ENCODE measurements at regions of chr16 and their contacts with region 1.

Region 1: DNA sequence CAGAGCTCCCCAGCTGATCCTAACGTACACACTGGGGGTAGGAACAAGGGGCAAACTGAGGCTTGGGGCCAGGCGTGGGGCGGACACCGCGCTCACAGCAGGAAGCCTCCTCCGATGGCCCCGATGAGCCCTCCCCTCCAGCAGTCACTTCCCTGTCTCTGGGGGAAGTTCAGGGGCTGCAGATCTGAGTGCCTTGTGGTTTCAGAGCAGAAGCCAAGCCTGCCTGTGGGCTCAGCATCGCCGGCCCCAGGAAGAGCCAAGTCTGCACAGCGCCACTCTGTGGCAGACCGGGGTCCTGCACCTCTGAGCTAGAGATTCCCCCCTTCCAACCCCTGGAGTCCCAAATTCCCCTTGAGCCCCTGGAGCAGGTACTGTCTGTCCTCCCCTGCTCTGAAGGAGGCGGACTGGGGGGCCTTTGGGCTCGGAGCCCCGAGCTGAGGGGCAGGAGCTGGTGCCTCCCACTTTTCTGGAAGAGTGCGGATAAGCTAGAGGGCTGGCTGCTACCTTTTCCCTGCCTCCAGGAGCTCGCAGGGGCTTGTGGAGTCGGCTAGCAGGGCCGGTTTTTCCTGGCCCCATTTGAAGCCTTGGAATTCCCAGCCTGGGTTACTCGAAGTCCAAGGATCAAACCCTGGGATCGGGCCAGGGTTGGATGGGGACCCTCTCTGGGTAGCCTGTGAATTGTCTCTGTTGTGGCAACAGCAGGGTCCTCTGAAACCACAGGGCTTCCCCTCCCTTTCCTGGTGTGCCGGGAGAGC is 2.9 kb downstream of the GSE1 start:
- DNase-seq: peak; percentile 79 to 84
- ATAC-seq: peak in 1 of 2 experiments; percentile 37; a peak in 3 of 6 replicates
- H3K4me3 ChIP-seq: peak overlapping the region; percentile 96
- H3K27ac ChIP-seq: peak overlapping the region; percentile 98 to 99; a peak in 5 of 6 replicates
- H3K4me1 ChIP-seq: peaks cover 22% of the 10 kb centered on the region
- CTCF ChIP-seq: peak; percentile 76
- EP300 ChIP-seq: no peak
- POLR2A ChIP-seq: no peak
- RAD21 ChIP-seq: peak; percentile 53 to 55

Region 2: GRCh38 chr16:85420501-85421337 is 195.3 kb before region 1 on chr16:
- CTCF ChIA-PET with region 1: interaction called, 85 read pairs
- POLR2A ChIA-PET with region 1: interaction called, 3 read pairs
- DNase-seq: peak; percentile 74 to 78
- ATAC-seq: peak; percentile 49 to 72; a peak in 5 of 6 replicates
- H3K4me3 ChIP-seq: no peak overlapping the region
- H3K27ac ChIP-seq: peak overlapping the region in 1 of 2 experiments; percentile 86; a peak in 3 of 6 replicates
- H3K4me1 ChIP-seq: peaks cover 27% of the 10 kb centered on the region
- CTCF ChIP-seq: peak; percentile 100
- EP300 ChIP-seq: no peak
- POLR2A ChIP-seq: no peak
- RAD21 ChIP-seq: peak; percentile 64 to 86

Region 3: DNA sequence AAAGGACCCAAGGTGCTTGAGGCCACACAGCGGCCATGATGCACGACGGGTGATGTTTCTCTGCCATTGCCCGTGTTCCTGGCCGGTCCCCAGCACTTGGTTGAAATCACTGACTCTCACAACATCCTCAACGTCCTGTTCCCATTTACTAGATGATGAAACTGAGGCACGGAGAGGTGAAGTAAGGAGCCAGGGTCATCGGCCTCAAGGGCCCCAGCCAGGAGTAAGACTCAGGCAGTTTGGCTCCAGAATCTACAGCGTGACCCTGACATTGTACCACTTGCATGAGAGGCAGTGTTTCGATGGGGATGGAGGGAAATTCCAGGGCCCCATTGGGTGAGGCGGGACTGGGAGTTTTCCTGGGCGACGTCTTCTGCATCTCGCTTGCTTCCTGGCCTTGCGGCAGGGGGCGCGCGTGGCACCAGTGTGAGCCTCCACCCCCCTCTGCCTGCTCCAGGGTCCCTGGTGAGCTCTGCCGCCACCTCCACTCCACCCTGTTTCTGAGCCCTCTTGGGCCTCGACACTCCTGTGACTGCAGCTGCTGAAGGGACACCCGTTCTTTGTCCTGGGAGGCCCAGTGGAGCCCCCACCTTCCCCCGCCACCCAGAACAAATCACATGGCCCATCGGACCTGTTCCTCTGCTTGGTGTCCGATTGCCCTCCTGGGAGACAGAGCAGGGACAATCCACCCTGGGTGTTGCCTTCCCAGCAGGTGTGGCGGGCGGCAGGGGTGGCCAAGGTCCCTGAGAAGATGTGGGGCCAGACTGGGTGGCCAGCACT is 135.9 kb before region 1 on chr16:
- CTCF ChIA-PET with region 1: interaction called, 55 read pairs
- POLR2A ChIA-PET with region 1: no interaction called
- DNase-seq: peak; percentile 67 to 94
- ATAC-seq: peak; percentile 89 to 95
- H3K4me3 ChIP-seq: no peak overlapping the region
- H3K27ac ChIP-seq: peak overlapping the region; percentile 18 to 70; a peak in 2 of 6 replicates
- H3K4me1 ChIP-seq: 0 out of 3 replicates have a peak, but pooled peaks cover 3% of the 10 kb centered on the region
- CTCF ChIP-seq: peak; percentile 73
- EP300 ChIP-seq: no peak
- POLR2A ChIP-seq: no peak
- RAD21 ChIP-seq: peak; percentile 65 to 76

Region 4: GRCh38 chr16:85564277-85565051 is 51.6 kb before region 1 on chr16:
- CTCF ChIA-PET with region 1: interaction called, 39 read pairs
- POLR2A ChIA-PET with region 1: interaction called, 3 read pairs
- DNase-seq: peak in 1 of 2 experiments; percentile 38
- ATAC-seq: peak; percentile 41 to 55; a peak in 5 of 6 replicates
- H3K4me3 ChIP-seq: no peak overlapping the region
- H3K27ac ChIP-seq: peak overlapping the region in 1 of 2 experiments; percentile 25; a peak in 1 of 6 replicates
- H3K4me1 ChIP-seq: peaks cover 17% of the 10 kb centered on the region
- CTCF ChIP-seq: peak; percentile 58
- EP300 ChIP-seq: no peak
- POLR2A ChIP-seq: no peak
- RAD21 ChIP-seq: 0 out of 5 replicates have a peak, but pooled peaks of 1 of the 2 experiments have one; percentile 22

Region 5: GRCh38 chr16:85652431-85653221 is 36.6 kb after region 1 on chr16:
- CTCF ChIA-PET with region 1: interaction called, 24 read pairs
- POLR2A ChIA-PET with region 1: interaction called, 3 read pairs
- DNase-seq: peak; percentile 25 to 62
- ATAC-seq: peak; percentile 41 to 70; a peak in 5 of 6 replicates
- H3K4me3 ChIP-seq: no peak overlapping the region
- H3K27ac ChIP-seq: peak overlapping the region in 1 of 2 experiments; percentile 44; a peak in 2 of 6 replicates
- H3K4me1 ChIP-seq: peaks cover 39% of the 10 kb centered on the region
- CTCF ChIP-seq: no peak
- EP300 ChIP-seq: no peak
- POLR2A ChIP-seq: no peak
- RAD21 ChIP-seq: no peak

Region 6: DNA sequence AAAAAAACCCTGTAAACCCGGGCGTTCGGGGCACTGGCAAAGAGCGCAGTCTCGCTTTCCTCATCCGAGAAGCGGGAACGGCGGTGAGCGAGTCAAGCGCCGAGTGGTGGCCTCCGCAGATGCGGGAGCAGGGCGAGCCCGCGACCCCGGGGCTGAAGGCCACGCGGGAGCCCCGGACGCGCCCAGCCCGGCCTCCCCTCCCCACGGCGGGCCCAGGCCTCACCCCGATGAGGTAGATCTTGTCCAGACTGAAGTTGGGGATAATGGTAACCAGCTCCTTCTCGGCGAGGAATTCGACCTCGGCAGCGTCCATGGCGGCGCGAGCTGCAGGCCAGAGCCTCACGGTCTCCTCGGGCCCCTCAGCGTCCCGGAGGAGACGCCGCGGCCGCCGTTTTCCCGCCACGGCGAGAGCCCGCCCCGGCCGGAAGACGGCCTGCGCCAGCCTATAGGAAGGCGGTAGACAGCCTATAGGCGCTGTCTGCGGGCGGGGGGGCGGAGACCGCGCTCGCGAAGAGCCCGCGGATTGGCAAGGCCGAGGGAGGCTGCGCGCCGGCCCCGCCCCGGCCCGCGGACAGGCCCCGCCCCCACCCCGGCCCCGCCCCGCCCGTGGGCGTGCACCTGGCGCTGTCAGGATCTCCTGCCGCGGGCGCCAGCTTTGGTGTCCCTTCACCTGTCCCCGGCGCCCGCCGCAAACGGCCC is 72.7 kb after region 1 on chr16 and contains the start of gene GINS2:
- CTCF ChIA-PET with region 1: interaction called, 10 read pairs
- POLR2A ChIA-PET with region 1: no interaction called
- DNase-seq: peak; percentile 91 to 97
- ATAC-seq: peak; percentile 99
- H3K4me3 ChIP-seq: peak within 1 kb of the TSS; percentile 81
- H3K27ac ChIP-seq: peak within 1 kb of the TSS; percentile 63 to 84
- H3K4me1 ChIP-seq: peaks cover 9% of the 10 kb centered on the region; the same call in 1 of the 3 replicates
- CTCF ChIP-seq: no peak
- EP300 ChIP-seq: no peak
- POLR2A ChIP-seq: no peak
- RAD21 ChIP-seq: no peak
- polyA plus RNA-seq, gene GINS2: 23.4 and 28.7 TPM in 2 replicates

Measured in A549 (cell line).